ENCODE measurements at regions of chr2 and their contacts with region 1.

Region 1: GRCh38 chr2:218568190-218569037 is at the starts of genes CNOT9 and USP37:
- DNase-seq: peak; percentile 100
- H3K4me3 ChIP-seq: peak within 1 kb of the TSS; percentile 75 to 84 (median 78)
- H3K27ac ChIP-seq: peak within 1 kb of the TSS; percentile 90 to 95 (median 92)
- H3K4me1 ChIP-seq: peaks cover 35 to 65% (median 46%) of the 10 kb centered on the region in 4 donors
- H3K27me3 ChIP-seq: no peaks in the 10 kb centered on the region
- CTCF ChIP-seq: no peak
- EP300 ChIP-seq: peak; percentile 89
- POLR2A ChIP-seq: peak; percentile 46
- total RNA-seq, gene CNOT9: 23.0 to 33.8 (median 28.8) TPM
- total RNA-seq, gene USP37: 6.7 to 15.0 (median 8.5) TPM

Region 2: DNA sequence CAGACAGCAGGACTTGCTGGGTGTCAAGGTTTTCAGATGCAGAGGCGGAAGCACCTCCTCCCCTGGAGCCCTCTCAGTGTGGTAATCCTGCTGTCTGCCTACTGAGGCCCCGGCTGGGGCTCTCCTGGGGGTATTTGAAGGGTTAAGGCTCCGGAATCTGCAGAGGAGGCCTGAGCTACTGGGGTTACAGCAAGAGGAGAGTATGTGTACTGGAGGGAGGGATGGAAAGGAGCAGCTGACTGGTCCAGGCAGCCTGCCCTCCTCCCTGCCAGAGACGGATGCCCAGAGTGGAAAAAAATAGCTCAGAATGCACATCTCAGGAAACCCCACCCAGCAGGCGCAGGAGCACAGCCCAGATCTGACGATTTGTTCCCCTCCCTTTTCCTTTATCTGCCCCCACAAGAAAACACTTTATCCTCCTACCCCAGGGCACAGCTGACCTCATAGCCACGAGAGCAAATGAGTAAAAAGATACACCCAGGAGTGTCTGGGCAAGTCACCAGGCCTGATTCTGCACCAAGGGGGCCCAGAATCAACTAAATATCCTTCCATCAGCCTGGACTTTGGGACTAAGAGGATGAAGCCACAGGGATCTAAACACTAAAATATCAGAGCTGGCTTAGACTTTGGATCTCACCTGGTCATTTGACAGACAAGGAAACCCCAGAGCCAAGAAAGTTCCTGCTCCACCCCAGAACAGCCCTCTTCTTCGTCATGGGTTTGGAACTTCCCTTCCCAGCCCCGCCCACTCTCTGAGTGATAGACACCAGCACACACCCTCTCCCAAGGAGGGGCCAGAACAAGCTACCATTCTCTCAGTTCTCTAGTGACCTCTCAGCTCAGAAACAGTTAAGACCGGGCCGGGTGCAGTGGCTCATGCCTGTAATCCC is 281.6 kb before region 1 on chr2:
- intact Hi-C with region 1: loop called (anchors 10 kb)
- DNase-seq: peak; percentile 99
- H3K4me3 ChIP-seq: peak overlapping the region; percentile 50 to 63 (median 54)
- H3K27ac ChIP-seq: peak overlapping the region; percentile 93 to 100 (median 96)
- H3K4me1 ChIP-seq: peaks cover 88 to 100% (median 98%) of the 10 kb centered on the region in 4 donors
- H3K27me3 ChIP-seq: no peaks in the 10 kb centered on the region
- CTCF ChIP-seq: peak in 1 of 3 experiments; percentile 13
- EP300 ChIP-seq: no peak
- POLR2A ChIP-seq: peak; percentile 36

Region 3: DNA sequence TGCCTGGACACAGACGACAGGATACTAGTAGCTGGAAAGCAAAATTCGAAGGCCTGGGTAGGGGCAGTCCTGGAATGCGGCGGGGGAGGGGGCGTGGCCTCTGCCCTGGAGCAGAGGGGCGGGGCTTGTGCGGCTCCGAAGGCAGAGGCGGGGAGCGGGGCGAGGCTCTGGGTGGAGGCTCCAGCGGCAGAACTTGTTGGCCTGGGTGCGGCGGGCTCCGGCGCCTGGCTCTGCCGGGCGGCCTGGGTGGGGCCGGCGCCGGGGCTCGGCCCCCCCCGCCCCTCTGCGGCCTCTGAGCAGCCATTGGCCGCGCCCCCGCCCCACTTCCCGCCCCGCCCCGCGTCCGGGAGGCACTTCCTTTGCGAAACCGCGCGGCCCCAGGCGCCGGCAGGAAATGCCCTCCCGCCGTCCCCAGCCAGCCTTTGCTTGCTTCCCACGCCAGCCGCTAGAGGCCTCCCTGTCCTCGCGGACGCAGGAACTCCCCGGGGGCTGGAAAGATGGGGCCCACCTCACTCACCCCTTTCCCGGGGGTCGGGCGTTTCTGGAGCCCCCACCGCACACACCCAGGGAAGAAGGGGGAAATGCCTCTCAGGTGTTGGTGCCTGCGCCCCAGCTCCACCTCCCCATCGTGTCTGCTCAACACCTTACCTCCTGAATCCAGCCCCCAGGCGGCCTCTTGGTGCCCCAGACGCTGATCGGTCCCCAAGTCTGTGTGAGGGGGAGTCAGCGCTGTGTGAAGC is 162.0 kb before region 1 on chr2:
- intact Hi-C with region 1: loop called (anchors 5 kb)
- DNase-seq: peak; percentile 98
- H3K4me3 ChIP-seq: peak overlapping the region; percentile 51 to 62 (median 56)
- H3K27ac ChIP-seq: peak overlapping the region; percentile 81 to 90 (median 88)
- H3K4me1 ChIP-seq: peaks cover 47 to 64% (median 62%) of the 10 kb centered on the region in 4 donors
- H3K27me3 ChIP-seq: no peaks in the 10 kb centered on the region
- CTCF ChIP-seq: peak; percentile 74 to 87 (median 77)
- EP300 ChIP-seq: no peak
- POLR2A ChIP-seq: no peak

Region 4: DNA sequence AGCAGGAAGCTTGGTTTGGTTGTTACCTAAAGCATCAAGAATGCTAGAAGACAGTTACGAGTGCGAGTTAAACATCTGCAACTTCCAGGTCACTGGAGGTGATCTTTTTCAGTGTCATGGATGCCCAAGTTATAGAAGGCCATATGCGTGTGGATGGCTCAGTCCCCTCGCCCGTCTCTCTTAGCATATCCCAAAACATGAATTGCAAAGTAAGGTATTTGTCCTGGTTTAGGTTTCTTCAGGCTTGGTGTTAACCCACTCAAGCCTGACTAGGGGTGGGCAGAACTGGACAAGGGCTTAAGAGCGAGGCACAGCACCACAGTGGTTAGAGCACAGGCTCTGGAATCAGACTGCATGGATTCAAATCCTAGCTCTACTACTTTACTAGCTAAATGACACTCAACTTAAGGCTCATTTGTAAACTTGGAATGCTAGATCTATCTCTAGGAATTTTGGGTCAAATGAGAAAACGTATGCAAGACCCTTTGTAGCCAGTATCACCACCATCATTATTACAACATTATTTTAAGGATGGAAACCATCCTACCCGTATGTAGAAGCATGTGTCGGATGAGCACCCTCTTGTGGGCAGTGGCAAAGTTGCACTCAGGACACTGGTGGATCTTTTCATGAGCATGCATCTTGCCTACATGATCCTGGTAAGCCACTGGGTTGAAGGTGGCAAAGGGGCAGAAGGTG is 79.8 kb after region 1 on chr2:
- intact Hi-C with region 1: loop called (anchors 5 kb)
- DNase-seq: no peak
- H3K4me3 ChIP-seq: no peak overlapping the region
- H3K27ac ChIP-seq: no peak overlapping the region
- H3K4me1 ChIP-seq: peaks cover 0 to 5% (median 0%) of the 10 kb centered on the region in 4 donors
- H3K27me3 ChIP-seq: no peaks in the 10 kb centered on the region
- CTCF ChIP-seq: peak; percentile 73 to 93 (median 75)
- EP300 ChIP-seq: no peak
- POLR2A ChIP-seq: no peak